ENCODE measurements at regions of chrX and their contacts with region 1.

Region 1: GRCh38 chrX:119266364-119266995 is 30.4 kb downstream of the PGRMC1 start:
- DNase-seq: peak in 1 of 2 donors; percentile 55
- ATAC-seq: peak in 1 of 3 donors; percentile 54
- H3K4me3 ChIP-seq: no peak overlapping the region
- H3K4me3 Mint-ChIP-seq: no peak overlapping the region
- H3K27ac ChIP-seq: no peak overlapping the region
- H3K27ac Mint-ChIP-seq: no peak overlapping the region
- H3K4me1 ChIP-seq: no peaks in the 10 kb centered on the region
- H3K4me1 Mint-ChIP-seq: no peaks in the 10 kb centered on the region
- H3K27me3 ChIP-seq: peaks cover 3% of the 10 kb centered on the region
- H3K27me3 Mint-ChIP-seq: peaks cover 5 to 29% of the 10 kb centered on the region in 2 donors
- CTCF ChIP-seq: peak; percentile 61

Region 2: DNA sequence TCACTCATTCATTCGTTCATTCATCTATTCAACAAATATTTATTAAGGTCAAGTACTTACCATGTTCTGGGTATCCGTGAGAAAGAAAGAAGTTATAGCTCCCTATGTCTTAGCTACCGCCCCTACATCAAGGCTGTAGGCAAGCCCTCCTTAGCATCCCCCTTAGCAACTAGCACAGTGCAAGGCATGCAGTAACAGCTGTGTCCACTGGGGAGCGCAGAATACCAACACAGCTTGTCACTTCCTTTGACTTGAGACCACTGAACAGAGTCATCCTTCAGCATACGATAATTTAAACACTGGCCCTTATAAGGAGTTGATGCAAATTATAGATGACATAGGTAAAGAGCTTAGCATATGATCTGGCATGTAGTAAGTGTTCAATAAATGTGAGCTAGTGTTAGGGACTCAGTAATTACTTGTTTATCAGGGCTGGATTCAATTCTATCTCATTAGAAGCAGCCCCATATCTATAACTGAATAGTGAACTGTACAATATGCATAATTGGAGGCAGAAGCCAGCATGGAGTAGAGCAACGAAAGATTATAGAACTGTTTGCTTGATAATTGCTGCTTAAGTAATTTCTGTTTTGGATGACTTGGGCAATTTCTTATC is 147.6 kb before region 1 on chrX:
- intact Hi-C with region 1: loop called (anchors 1 kb)
- DNase-seq: peak; percentile 25 to 67
- ATAC-seq: peak; percentile 74 to 95 (median 82)
- H3K4me3 ChIP-seq: no peak overlapping the region
- H3K4me3 Mint-ChIP-seq: no peak overlapping the region
- H3K27ac ChIP-seq: no peak overlapping the region
- H3K27ac Mint-ChIP-seq: no peak overlapping the region
- H3K4me1 ChIP-seq: no peaks in the 10 kb centered on the region
- H3K4me1 Mint-ChIP-seq: no peaks in the 10 kb centered on the region
- H3K27me3 ChIP-seq: no peaks in the 10 kb centered on the region
- H3K27me3 Mint-ChIP-seq: peaks cover 0 to 34% of the 10 kb centered on the region in 2 donors
- CTCF ChIP-seq: peak; percentile 60

Measured in natural killer cell (primary cell).